Body of pancreas (tissue), 4 donors: ENCODE measurements at regions of chr13 and their contacts with region 1.

Region 1: DNA sequence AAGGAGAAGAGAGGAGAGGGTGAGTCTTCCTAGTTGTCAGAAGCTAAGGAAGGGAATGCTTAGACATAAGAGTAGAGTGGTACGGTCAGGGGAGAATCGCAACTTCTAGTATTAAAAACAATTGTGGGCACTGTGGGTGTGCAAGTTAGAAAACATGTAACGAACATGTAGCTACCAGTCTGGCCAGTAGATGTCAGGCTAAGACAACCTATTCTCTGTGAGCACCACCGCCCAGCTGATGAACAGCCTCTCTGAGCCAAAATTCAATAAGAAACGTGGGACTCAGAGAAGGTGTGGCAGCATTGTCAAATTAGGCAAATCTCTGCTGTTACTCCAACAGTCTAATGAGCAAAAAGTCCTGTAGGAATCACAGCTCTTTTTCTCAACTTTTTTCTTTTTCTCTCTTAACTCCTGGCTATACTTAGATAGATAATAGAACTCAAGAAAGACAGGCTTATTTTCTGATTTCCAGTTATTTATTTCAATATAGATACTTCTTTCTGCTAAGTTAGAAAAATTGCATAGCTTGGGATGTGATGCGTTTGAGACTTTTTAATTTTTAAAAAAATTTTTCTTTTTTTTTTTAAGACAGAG is 186.2 kb downstream of the USP12 start:
- DNase-seq: peak; percentile 83 to 89 (median 84)
- ATAC-seq: peak; percentile 57
- H3K4me3 ChIP-seq: no peak overlapping the region
- H3K27ac ChIP-seq: no peak overlapping the region
- H3K4me1 ChIP-seq: peaks cover 26% of the 10 kb centered on the region
- H3K27me3 ChIP-seq: no peaks in the 10 kb centered on the region
- CTCF ChIP-seq: peak; percentile 56 to 92 (median 89)
- POLR2A ChIP-seq: no peak

Region 2: GRCh38 chr13:27161980-27162379 is 176.6 kb after region 1 on chr13:
- intact Hi-C with region 1: no loop called
- DNase-seq: no peak
- ATAC-seq: no peak
- H3K4me3 ChIP-seq: no peak overlapping the region
- H3K27ac ChIP-seq: no peak overlapping the region
- H3K4me1 ChIP-seq: peaks cover 10% of the 10 kb centered on the region
- H3K27me3 ChIP-seq: no peaks in the 10 kb centered on the region
- CTCF ChIP-seq: no peak
- POLR2A ChIP-seq: no peak

Region 3: DNA sequence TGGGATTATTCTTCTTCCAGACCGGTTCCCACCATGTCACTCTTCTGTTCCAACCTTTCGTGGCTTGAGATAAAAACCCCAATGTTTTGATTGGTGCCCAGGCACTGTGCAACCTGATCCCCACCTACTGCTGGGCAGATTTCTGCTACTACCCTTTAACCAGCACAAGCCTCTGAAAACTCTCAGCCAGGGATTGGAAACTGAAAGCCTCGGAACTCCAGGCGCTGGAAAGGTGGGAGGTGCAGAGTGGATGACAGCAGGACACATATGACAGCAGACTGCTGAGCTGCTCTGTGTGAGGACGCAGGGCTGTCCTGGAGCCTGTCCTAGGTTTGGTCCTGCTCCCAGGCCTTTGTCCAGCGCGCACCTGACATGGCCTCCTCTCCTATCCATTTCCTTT is 370.5 kb after region 1 on chr13:
- intact Hi-C with region 1: loop called (anchors 2 kb)
- DNase-seq: no peak
- ATAC-seq: no peak
- H3K4me3 ChIP-seq: no peak overlapping the region
- H3K27ac ChIP-seq: no peak overlapping the region
- H3K4me1 ChIP-seq: no peaks in the 10 kb centered on the region
- H3K27me3 ChIP-seq: no peaks in the 10 kb centered on the region
- CTCF ChIP-seq: no peak
- POLR2A ChIP-seq: no peak

Region 4: GRCh38 chr13:27449936-27450828 is 464.8 kb after region 1 on chr13 and contains the start of gene MTIF3:
- intact Hi-C with region 1: no loop called
- DNase-seq: peak; percentile 97 to 98 (median 98)
- ATAC-seq: peak; percentile 89
- H3K4me3 ChIP-seq: peak within 1 kb of the TSS; percentile 35 to 91
- H3K27ac ChIP-seq: peak within 1 kb of the TSS; percentile 98 to 100 (median 99)
- H3K4me1 ChIP-seq: peaks cover 30% of the 10 kb centered on the region
- H3K27me3 ChIP-seq: no peaks in the 10 kb centered on the region
- CTCF ChIP-seq: peak in 4 of 7 experiments; percentile 3 to 22 (median 20)
- POLR2A ChIP-seq: peak; percentile 77 to 98 (median 97)
- total RNA-seq, gene MTIF3: 26.0 to 51.1 TPM